Natural killer cell (primary cell): ENCODE measurements at regions of chr17 and their contacts with region 1.

Region 1: GRCh38 chr17:82080048-82080788 is 14.6 kb upstream of the DUS1L start:
- DNase-seq: no peak
- ATAC-seq: no peak
- H3K4me3 ChIP-seq: no peak overlapping the region
- H3K4me3 Mint-ChIP-seq: no peak overlapping the region
- H3K27ac ChIP-seq: no peak overlapping the region
- H3K27ac Mint-ChIP-seq: no peak overlapping the region
- H3K4me1 ChIP-seq: no peaks in the 10 kb centered on the region
- H3K4me1 Mint-ChIP-seq: no peaks in the 10 kb centered on the region
- H3K27me3 ChIP-seq: no peaks in the 10 kb centered on the region
- H3K27me3 Mint-ChIP-seq: no peaks in the 10 kb centered on the region
- CTCF ChIP-seq: no peak

Region 2: GRCh38 chr17:81365148-81365600 is 715.0 kb before region 1 on chr17:
- intact Hi-C with region 1: no loop called
- DNase-seq: peak; percentile 32 to 44
- ATAC-seq: peak in 2 of 3 donors; percentile 75 to 76
- H3K4me3 ChIP-seq: peak overlapping the region; percentile 3
- H3K4me3 Mint-ChIP-seq: peak overlapping the region; percentile 82
- H3K27ac ChIP-seq: no peak overlapping the region
- H3K27ac Mint-ChIP-seq: peak overlapping the region in 1 of 2 donors; percentile 82
- H3K4me1 ChIP-seq: peaks cover 32% of the 10 kb centered on the region
- H3K4me1 Mint-ChIP-seq: peaks cover 21 to 29% of the 10 kb centered on the region in 2 donors
- H3K27me3 ChIP-seq: peaks cover 18% of the 10 kb centered on the region
- H3K27me3 Mint-ChIP-seq: peaks cover 32 to 40% of the 10 kb centered on the region in 2 donors
- CTCF ChIP-seq: no peak

Region 3: GRCh38 chr17:82065638-82066303 is 14.4 kb before region 1 on chr17 and contains the start of gene DUS1L:
- intact Hi-C with region 1: loop called (anchors 1 kb)
- DNase-seq: peak; percentile 74 to 87
- ATAC-seq: peak; percentile 91 to 94 (median 91)
- H3K4me3 ChIP-seq: peak within 1 kb of the TSS; percentile 71
- H3K4me3 Mint-ChIP-seq: peak within 1 kb of the TSS; percentile 86
- H3K27ac ChIP-seq: peak within 1 kb of the TSS; percentile 91
- H3K27ac Mint-ChIP-seq: peak within 1 kb of the TSS; percentile 77 to 80
- H3K4me1 ChIP-seq: peaks cover 30% of the 10 kb centered on the region
- H3K4me1 Mint-ChIP-seq: peaks cover 4 to 13% of the 10 kb centered on the region in 2 donors
- H3K27me3 ChIP-seq: no peaks in the 10 kb centered on the region
- H3K27me3 Mint-ChIP-seq: no peaks in the 10 kb centered on the region
- CTCF ChIP-seq: no peak
- total RNA-seq, gene DUS1L: 122 to 144 (median 136) TPM

Region 4: DNA sequence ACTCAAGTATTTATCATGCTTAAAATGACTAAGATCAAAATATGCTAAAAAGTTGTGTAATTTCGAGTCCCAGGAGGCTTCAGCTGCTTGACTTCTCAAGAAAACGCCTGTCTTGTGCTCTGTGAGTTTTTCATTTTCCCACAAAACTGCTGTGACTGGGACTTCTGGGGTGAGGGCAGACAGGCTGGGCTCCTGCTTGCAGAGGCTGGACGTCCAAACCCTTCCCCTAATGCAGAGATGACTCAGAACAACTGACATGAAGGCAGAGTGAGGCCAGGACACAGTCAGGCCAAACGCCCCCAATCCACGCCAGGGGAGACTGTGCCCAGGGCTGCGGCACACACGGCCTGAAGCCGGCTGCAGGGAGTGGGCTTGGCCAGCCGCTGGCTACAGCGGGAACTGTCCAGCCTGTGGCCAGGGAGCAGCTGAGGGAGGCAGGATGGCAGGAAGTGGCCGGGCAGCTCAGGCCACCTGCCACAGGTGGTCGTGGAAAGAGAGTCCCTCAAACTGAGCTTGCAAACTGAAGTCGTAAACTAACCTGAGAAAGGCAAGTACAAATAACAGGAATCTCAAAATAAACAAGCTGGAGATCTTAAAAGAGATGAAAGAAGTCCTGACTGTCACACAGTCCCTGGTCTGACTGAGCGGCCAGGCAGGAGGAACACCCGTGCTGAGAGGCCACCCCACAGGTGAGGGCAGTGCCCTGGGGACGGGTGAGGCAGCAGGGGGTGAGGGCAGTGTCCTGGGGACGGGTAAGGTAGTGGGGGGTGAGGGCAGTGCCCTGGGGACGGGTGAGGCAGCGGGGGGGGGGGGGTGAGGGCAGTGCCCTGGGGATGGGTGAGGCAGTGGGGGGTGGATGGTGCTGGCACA is 316.6 kb after region 1 on chr17:
- intact Hi-C with region 1: no loop called
- DNase-seq: no peak
- ATAC-seq: no peak
- H3K4me3 ChIP-seq: no peak overlapping the region
- H3K4me3 Mint-ChIP-seq: no peak overlapping the region
- H3K27ac ChIP-seq: no peak overlapping the region
- H3K27ac Mint-ChIP-seq: no peak overlapping the region
- H3K4me1 ChIP-seq: peaks cover 23% of the 10 kb centered on the region
- H3K4me1 Mint-ChIP-seq: peaks cover 13 to 14% of the 10 kb centered on the region in 2 donors
- H3K27me3 ChIP-seq: no peaks in the 10 kb centered on the region
- H3K27me3 Mint-ChIP-seq: no peaks in the 10 kb centered on the region
- CTCF ChIP-seq: no peak